K562 (cell line): ENCODE measurements at regions of chr9 and their contacts with region 1.

Region 1: GRCh38 chr9:114653556-114654159 is 3.9 kb downstream of the TEX53 start:
- DNase-seq: peak; percentile 69 to 79 (median 74)
- ATAC-seq: peak; percentile 87
- H3K4me3 ChIP-seq: no peak overlapping the region
- H3K27ac ChIP-seq: no peak overlapping the region
- H3K4me1 ChIP-seq: peaks cover 0 to 5% of the 10 kb centered on the region in 2 experiments; a peak in 1 of 5 replicates
- H3K27me3 ChIP-seq: peaks cover 0 to 13% of the 10 kb centered on the region in 2 experiments; a peak in 2 of 5 replicates
- CTCF ChIP-seq: peak; percentile 88 to 98 (median 90)
- EP300 ChIP-seq: no peak
- POLR2A ChIP-seq: no peak
- RAD21 ChIP-seq: peak; percentile 95 to 96

Region 2: GRCh38 chr9:114339130-114339908 is 314.3 kb before region 1 on chr9:
- CTCF ChIA-PET with region 1: interaction called, 4 read pairs
- POLR2A ChIA-PET with region 1: interaction called, 3 read pairs
- in situ Hi-C with region 1: no loop called
- intact Hi-C with region 1: loop called (anchors 5 kb)
- DNase-seq: peak; percentile 72 to 88 (median 86)
- ATAC-seq: peak; percentile 84
- H3K4me3 ChIP-seq: no peak overlapping the region
- H3K27ac ChIP-seq: no peak overlapping the region
- H3K4me1 ChIP-seq: peaks cover 0 to 3% of the 10 kb centered on the region in 2 experiments; a peak in 1 of 5 replicates
- H3K27me3 ChIP-seq: no peaks in the 10 kb centered on the region
- CTCF ChIP-seq: peak; percentile 83 to 95 (median 86)
- EP300 ChIP-seq: no peak
- POLR2A ChIP-seq: no peak
- RAD21 ChIP-seq: peak; percentile 14 to 56; a peak in 2 of 4 replicates

Region 3: DNA sequence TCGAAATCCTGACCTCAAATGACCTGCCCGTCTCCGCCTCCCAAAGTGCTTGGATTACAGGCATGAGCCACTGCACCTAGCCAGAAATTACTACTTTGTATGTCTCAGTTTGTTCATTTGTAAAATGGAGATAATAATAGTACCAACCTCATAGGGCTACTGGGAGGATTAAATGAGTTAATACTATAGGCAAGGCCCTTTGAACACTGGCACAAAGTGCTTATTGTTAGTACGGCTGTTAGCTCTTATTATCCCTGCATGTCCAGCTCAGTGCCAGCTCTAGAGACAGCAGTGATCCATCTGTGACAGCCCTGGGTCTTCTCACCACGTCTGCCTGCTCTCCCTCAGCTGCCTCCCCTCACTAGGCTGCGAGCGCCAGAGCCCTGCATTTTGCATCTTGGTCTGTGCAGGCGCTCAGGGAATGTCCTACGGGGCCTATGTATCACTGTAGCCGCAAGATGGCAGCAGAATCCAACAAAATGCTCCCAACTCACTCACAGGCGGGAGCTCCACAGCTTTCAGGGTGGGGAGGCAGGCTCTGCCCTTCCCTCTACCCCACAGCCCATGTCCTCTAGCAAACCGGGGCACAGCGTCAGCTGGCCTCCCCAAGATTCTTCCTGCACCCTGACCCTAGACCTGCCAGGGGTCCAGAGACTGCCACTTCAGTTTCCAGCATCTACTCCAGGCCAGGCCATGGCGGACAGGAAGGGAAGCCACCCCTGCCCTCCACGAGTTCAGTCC is 248.2 kb before region 1 on chr9:
- CTCF ChIA-PET with region 1: interaction called, 12 read pairs
- POLR2A ChIA-PET with region 1: interaction called, 3 read pairs
- in situ Hi-C with region 1: no loop called
- intact Hi-C with region 1: loop called (anchors 1 kb)
- DNase-seq: peak; percentile 75 to 83 (median 80)
- ATAC-seq: peak; percentile 97
- H3K4me3 ChIP-seq: no peak overlapping the region
- H3K27ac ChIP-seq: no peak overlapping the region
- H3K4me1 ChIP-seq: no peaks in the 10 kb centered on the region; a peak in 2 of 5 replicates
- H3K27me3 ChIP-seq: peaks cover 0 to 5% of the 10 kb centered on the region in 2 experiments; a peak in 1 of 5 replicates
- CTCF ChIP-seq: peak; percentile 85 to 91 (median 88)
- EP300 ChIP-seq: no peak
- POLR2A ChIP-seq: no peak
- RAD21 ChIP-seq: peak; percentile 76 to 88

Region 4: DNA sequence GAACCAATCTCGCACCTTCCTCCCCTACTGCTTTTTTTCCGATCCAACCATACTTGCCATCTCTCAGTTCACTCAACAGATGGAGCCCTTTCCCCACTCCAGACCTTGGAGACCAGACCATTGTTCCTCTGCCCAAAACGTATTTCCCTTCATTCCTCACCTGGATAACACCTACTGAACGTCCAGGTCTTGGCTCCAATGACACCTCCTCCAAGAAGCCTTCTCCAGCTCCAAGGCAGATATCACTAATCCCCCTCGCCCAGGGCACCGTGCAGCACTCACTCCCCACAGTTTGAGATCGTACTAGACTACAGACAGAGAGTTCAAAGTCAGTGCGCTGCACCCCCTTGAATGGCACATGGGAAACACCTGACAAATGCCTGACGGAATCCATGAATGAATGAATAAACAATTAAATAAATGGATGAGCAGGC is 218.8 kb before region 1 on chr9:
- CTCF ChIA-PET with region 1: interaction called, 12 read pairs
- POLR2A ChIA-PET with region 1: interaction called, 3 read pairs
- in situ Hi-C with region 1: loop called (anchors 5 kb)
- intact Hi-C with region 1: loop called (anchors 1 kb)
- DNase-seq: peak; percentile 31 to 60 (median 46)
- ATAC-seq: peak; percentile 86
- H3K4me3 ChIP-seq: no peak overlapping the region
- H3K27ac ChIP-seq: no peak overlapping the region
- H3K4me1 ChIP-seq: peaks cover 0 to 6% of the 10 kb centered on the region in 2 experiments; a peak in 2 of 5 replicates
- H3K27me3 ChIP-seq: no peaks in the 10 kb centered on the region; a peak in 1 of 5 replicates
- CTCF ChIP-seq: peak; percentile 64 to 78 (median 71)
- EP300 ChIP-seq: no peak
- POLR2A ChIP-seq: no peak
- RAD21 ChIP-seq: peak; percentile 71 to 87

Region 5: DNA sequence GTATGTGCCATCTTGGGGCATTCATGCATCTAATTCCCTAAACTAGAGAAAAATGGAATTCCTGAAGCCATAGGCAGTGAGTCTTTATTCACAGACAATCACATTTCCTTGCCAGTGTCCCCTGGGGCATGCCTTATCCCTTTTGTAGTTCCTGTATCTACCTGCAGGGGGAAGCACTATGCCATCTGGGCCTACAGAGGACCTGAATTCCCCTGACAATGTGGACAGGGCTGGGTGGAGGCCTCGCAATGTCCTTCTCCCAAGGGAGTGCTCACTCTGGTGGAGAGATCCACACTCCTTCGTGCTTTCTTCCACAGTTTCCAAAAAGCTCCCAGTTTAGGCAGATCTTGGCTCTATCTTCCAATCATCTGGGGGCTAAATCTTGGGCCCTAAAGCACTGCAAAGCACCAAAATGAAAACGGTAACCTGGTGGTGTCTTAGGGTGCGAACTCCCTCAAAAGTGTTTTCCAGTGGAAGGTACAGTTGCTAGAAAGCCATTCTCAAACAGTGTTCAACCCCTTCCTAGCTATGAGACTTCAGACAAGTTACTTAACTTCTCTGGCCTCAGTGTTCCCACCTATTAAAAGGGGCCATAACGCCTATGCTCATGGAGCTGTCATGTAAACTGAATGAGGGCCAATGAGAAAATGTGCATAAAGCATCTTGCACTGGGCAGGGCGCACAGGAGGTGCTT is 165.9 kb before region 1 on chr9:
- CTCF ChIA-PET with region 1: interaction called, 14 read pairs
- POLR2A ChIA-PET with region 1: no interaction called
- in situ Hi-C with region 1: no loop called
- intact Hi-C with region 1: loop called (anchors 1 kb)
- DNase-seq: peak; percentile 78 to 85 (median 78)
- ATAC-seq: peak; percentile 95
- H3K4me3 ChIP-seq: no peak overlapping the region
- H3K27ac ChIP-seq: no peak overlapping the region; the same call in 2 of the 3 replicates
- H3K4me1 ChIP-seq: peaks cover 5 to 21% of the 10 kb centered on the region in 2 experiments; a peak in 3 of 5 replicates
- H3K27me3 ChIP-seq: no peaks in the 10 kb centered on the region
- CTCF ChIP-seq: peak; percentile 80 to 93 (median 82)
- EP300 ChIP-seq: no peak
- POLR2A ChIP-seq: no peak
- RAD21 ChIP-seq: peak; percentile 77 to 87

Region 6: GRCh38 chr9:114505187-114506081 is 148.2 kb before region 1 on chr9 and contains the start of gene WHRN:
- CTCF ChIA-PET with region 1: interaction called, 4 read pairs
- POLR2A ChIA-PET with region 1: interaction called, 5 read pairs
- in situ Hi-C with region 1: no loop called
- intact Hi-C with region 1: loop called (anchors 2 kb)
- DNase-seq: peak; percentile 95 to 96 (median 96)
- ATAC-seq: peak; percentile 80
- H3K4me3 ChIP-seq: peak within 1 kb of the TSS; percentile 60
- H3K27ac ChIP-seq: peak within 1 kb of the TSS; percentile 91
- H3K4me1 ChIP-seq: peaks cover 21 to 24% of the 10 kb centered on the region in 2 experiments; a peak in 3 of 5 replicates
- H3K27me3 ChIP-seq: peaks cover 15 to 18% of the 10 kb centered on the region in 2 experiments
- CTCF ChIP-seq: no peak
- EP300 ChIP-seq: no peak
- POLR2A ChIP-seq: peak; percentile 56
- RAD21 ChIP-seq: no peak
- polyA plus RNA-seq, gene WHRN: 0.31 TPM

Region 7: DNA sequence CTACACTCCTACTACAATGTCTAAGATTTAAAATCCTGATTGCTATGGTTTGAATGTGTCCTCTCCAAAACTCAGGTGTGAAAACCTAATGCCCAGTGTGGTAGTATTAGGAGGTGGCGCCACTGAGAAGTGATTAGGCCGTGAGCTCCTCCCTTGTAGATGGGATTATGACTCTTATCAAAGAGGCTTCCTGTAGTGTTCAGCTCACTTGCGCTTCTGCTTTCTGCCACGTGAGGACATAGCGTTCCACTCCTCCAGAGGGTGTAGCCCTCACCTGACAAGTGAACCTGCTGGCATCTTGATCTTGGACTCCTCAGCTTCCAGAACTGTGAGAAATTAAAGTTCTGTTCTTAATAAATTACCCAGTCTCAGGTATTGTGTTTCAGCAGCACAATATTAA is 115.4 kb before region 1 on chr9:
- CTCF ChIA-PET with region 1: interaction called, 3 read pairs
- POLR2A ChIA-PET with region 1: interaction called, 4 read pairs
- in situ Hi-C with region 1: no loop called
- intact Hi-C with region 1: loop called (anchors 1 kb)
- DNase-seq: peak in 3 of 4 experiments; percentile 30 to 63 (median 41)
- ATAC-seq: peak; percentile 99
- H3K4me3 ChIP-seq: no peak overlapping the region
- H3K27ac ChIP-seq: no peak overlapping the region
- H3K4me1 ChIP-seq: no peaks in the 10 kb centered on the region
- H3K27me3 ChIP-seq: peaks cover 13 to 19% of the 10 kb centered on the region in 2 experiments; a peak in 3 of 5 replicates
- CTCF ChIP-seq: peak; percentile 53 to 65 (median 62)
- EP300 ChIP-seq: no peak
- POLR2A ChIP-seq: no peak
- RAD21 ChIP-seq: peak; percentile 36 to 71; a peak in 3 of 4 replicates

Region 8: GRCh38 chr9:114696814-114697544 is 43.3 kb after region 1 on chr9:
- CTCF ChIA-PET with region 1: no interaction called
- POLR2A ChIA-PET with region 1: no interaction called
- in situ Hi-C with region 1: no loop called
- intact Hi-C with region 1: no loop called
- DNase-seq: no peak
- ATAC-seq: no peak
- H3K4me3 ChIP-seq: no peak overlapping the region
- H3K27ac ChIP-seq: no peak overlapping the region
- H3K4me1 ChIP-seq: no peaks in the 10 kb centered on the region
- H3K27me3 ChIP-seq: peaks cover under 1 to 7% of the 10 kb centered on the region in 2 experiments; a peak in 2 of 5 replicates
- CTCF ChIP-seq: no peak
- EP300 ChIP-seq: no peak
- POLR2A ChIP-seq: no peak
- RAD21 ChIP-seq: no peak

Region 9: GRCh38 chr9:114754581-114754980 is 100.9 kb after region 1 on chr9:
- CTCF ChIA-PET with region 1: no interaction called
- POLR2A ChIA-PET with region 1: no interaction called
- in situ Hi-C with region 1: no loop called
- intact Hi-C with region 1: no loop called
- DNase-seq: no peak
- ATAC-seq: no peak
- H3K4me3 ChIP-seq: no peak overlapping the region
- H3K27ac ChIP-seq: no peak overlapping the region
- H3K4me1 ChIP-seq: no peaks in the 10 kb centered on the region
- H3K27me3 ChIP-seq: no peaks in the 10 kb centered on the region; a peak in 1 of 5 replicates
- CTCF ChIP-seq: no peak
- EP300 ChIP-seq: no peak
- POLR2A ChIP-seq: no peak
- RAD21 ChIP-seq: no peak

Region 10: DNA sequence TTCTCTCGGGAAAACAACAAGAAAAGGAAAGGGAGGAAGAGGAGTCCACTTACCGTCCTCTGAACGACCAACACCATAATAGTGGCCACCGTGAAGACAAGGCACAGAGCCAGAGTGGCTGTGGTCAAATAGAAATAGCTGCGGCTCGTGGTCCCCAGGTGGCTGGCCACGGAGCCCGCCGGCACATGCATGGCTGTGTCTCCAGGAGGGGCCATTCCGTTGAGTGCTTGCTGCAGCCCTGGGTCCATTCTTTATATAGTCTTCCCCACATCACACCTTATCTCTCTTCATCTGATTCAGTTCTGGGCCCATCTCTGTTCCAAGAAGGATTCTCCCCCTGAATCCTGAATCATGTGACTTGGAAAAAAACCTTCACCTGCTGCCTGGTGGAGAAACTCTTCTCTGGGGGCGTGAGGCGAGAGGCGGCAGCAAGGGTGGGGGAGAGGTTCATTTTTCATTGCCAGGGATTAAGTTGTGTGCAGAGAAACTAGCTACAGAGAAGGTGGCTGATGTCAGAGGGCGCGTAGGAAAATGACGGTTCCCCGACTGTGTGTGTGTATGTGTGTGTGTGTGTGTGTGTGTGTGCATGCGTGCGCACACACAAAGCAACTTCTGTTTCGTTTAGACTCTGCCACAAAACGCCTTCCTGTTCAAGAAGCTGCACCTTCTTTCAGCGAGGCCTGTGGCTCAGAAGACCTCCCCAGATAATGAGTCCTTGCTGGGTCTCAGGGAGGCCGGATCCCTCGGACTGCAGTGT is 276.6 kb after region 1 on chr9 and contains the start of gene TNFSF8:
- CTCF ChIA-PET with region 1: no interaction called
- POLR2A ChIA-PET with region 1: no interaction called
- in situ Hi-C with region 1: no loop called
- intact Hi-C with region 1: no loop called
- DNase-seq: no peak
- ATAC-seq: no peak
- H3K4me3 ChIP-seq: no peak within 1 kb of the TSS
- H3K27ac ChIP-seq: no peak within 1 kb of the TSS
- H3K4me1 ChIP-seq: no peaks in the 10 kb centered on the region
- H3K27me3 ChIP-seq: no peaks in the 10 kb centered on the region; a peak in 1 of 5 replicates
- CTCF ChIP-seq: no peak
- EP300 ChIP-seq: no peak
- POLR2A ChIP-seq: no peak
- RAD21 ChIP-seq: no peak
- polyA plus RNA-seq, gene TNFSF8: not detected